ENCODE measurements at regions of chr14 and their contacts with region 1.

Region 1: GRCh38 chr14:74712499-74713394 is at the starts of genes AREL1 and FCF1:
- DNase-seq: peak; percentile 69
- ATAC-seq: peak; percentile 90
- H3K4me3 Mint-ChIP-seq: peak within 1 kb of the TSS; percentile 95
- H3K27ac Mint-ChIP-seq: peak within 1 kb of the TSS; percentile 92
- H3K4me1 Mint-ChIP-seq: peaks cover 49% of the 10 kb centered on the region
- H3K27me3 Mint-ChIP-seq: no peaks in the 10 kb centered on the region
- CTCF ChIP-seq: no peak
- total RNA-seq, gene AREL1: 46.5 and 49.7 TPM in 2 replicates
- total RNA-seq, gene FCF1: 49.4 and 49.5 TPM in 2 replicates

Region 2: GRCh38 chr14:73136387-73137225 is 1576.1 kb before region 1 on chr14 and contains the start of gene PSEN1:
- CTCF ChIA-PET with region 1: no interaction called
- POLR2A ChIA-PET with region 1: no interaction called
- intact Hi-C with region 1: loop called (anchors 2 kb)
- DNase-seq: peak; percentile 99
- ATAC-seq: peak; percentile 92
- H3K4me3 Mint-ChIP-seq: peak within 1 kb of the TSS; percentile 95
- H3K27ac Mint-ChIP-seq: peak within 1 kb of the TSS; percentile 98
- H3K4me1 Mint-ChIP-seq: peaks cover 33% of the 10 kb centered on the region
- H3K27me3 Mint-ChIP-seq: no peaks in the 10 kb centered on the region
- CTCF ChIP-seq: no peak
- total RNA-seq, gene PSEN1: 38.6 and 42.9 TPM in 2 replicates

Region 3: GRCh38 chr14:74618078-74618952 is 94.4 kb before region 1 on chr14:
- CTCF ChIA-PET with region 1: no interaction called
- POLR2A ChIA-PET with region 1: no interaction called
- intact Hi-C with region 1: loop called (anchors 2 kb)
- DNase-seq: peak; percentile 32
- ATAC-seq: peak; percentile 71
- H3K4me3 Mint-ChIP-seq: peak overlapping the region; percentile 62
- H3K27ac Mint-ChIP-seq: peak overlapping the region; percentile 80
- H3K4me1 Mint-ChIP-seq: peaks cover 57% of the 10 kb centered on the region
- H3K27me3 Mint-ChIP-seq: peaks cover 7% of the 10 kb centered on the region
- CTCF ChIP-seq: no peak

Region 4: DNA sequence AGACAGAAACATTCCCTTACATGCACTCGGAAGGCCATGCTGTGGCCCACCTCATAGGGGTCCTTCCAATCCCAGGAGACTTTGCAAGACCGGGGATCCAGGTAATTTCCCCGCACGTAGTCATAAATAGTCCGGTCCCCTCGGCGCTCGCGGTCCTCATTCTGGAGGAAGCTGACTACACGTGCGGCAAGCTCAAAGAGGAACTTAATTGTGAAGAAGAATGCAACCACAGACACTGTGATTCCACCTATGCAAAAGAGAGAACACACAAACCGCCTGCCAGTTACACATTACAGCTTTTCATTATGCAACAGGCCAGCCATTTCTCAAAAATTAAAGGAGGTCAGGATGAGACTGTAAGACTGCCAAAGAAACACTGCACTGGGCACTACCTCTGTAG is 28.3 kb before region 1 on chr14:
- CTCF ChIA-PET with region 1: no interaction called
- POLR2A ChIA-PET with region 1: no interaction called
- intact Hi-C with region 1: loop called (anchors 2 kb)
- DNase-seq: peak; percentile 18
- ATAC-seq: peak; percentile 90
- H3K4me3 Mint-ChIP-seq: peak overlapping the region; percentile 58
- H3K27ac Mint-ChIP-seq: peak overlapping the region; percentile 68
- H3K4me1 Mint-ChIP-seq: peaks cover 31% of the 10 kb centered on the region
- H3K27me3 Mint-ChIP-seq: no peaks in the 10 kb centered on the region
- CTCF ChIP-seq: no peak

Region 5: DNA sequence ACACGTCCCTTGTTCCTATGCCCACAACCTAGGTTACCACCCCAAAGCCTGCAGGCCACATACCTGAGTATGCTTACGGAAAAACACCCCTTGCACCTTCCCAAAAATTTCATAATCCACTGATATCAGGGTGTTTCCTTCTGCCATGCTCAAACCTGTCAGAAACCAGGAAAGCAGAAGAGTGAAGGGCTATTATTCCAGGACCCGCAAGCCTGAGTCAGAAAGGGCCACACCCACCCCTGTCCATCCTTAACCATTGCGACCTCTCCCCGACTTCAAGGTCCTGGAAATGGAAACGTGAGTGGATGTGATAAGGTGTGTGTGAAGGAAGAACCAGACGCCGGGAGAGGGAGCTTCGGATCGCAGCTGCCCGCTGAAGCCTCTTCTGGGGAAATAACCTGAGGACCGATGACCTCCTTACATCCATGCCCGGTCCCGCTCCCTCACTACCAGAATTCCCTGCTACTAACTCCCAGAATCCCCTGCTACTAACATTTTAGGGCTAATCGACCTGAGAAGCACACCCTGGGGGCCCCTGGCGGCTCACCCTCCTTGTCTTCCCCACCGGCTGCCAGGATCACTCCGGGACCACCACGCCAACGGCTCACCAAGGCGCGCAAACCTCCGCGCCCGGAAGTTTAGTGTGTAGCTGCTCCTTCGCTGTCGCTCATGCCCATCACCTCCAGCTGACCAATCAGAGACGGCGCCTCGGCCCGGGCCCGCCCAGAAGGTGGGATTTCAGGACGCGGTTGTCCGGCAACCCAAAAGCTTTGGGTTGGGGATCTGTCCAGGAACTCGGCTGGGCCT is 350.9 kb after region 1 on chr14 and contains the start of gene ACYP1:
- CTCF ChIA-PET with region 1: no interaction called
- POLR2A ChIA-PET with region 1: no interaction called
- intact Hi-C with region 1: loop called (anchors 10 kb)
- DNase-seq: peak; percentile 90
- ATAC-seq: peak; percentile 99
- H3K4me3 Mint-ChIP-seq: peak within 1 kb of the TSS; percentile 100
- H3K27ac Mint-ChIP-seq: peak within 1 kb of the TSS; percentile 94
- H3K4me1 Mint-ChIP-seq: peaks cover 19% of the 10 kb centered on the region
- H3K27me3 Mint-ChIP-seq: no peaks in the 10 kb centered on the region
- CTCF ChIP-seq: no peak
- total RNA-seq, gene ACYP1: 21.6 and 25.9 TPM in 2 replicates